ENCODE measurements at regions of chrX and their contacts with region 1.

Region 1: GRCh38 chrX:69285881-69286564 is 120.8 kb upstream of the PJA1 start:
- DNase-seq: no peak
- H3K4me3 ChIP-seq: peak overlapping the region; percentile 47 to 59 (median 50)
- H3K27ac ChIP-seq: peak overlapping the region; percentile 28 to 72 (median 68)
- H3K4me1 ChIP-seq: peaks cover 6 to 27% (median 19%) of the 10 kb centered on the region in 4 donors
- H3K27me3 ChIP-seq: no peaks in the 10 kb centered on the region
- CTCF ChIP-seq: peak; percentile 81 to 88 (median 88)
- EP300 ChIP-seq: no peak
- POLR2A ChIP-seq: no peak

Region 2: DNA sequence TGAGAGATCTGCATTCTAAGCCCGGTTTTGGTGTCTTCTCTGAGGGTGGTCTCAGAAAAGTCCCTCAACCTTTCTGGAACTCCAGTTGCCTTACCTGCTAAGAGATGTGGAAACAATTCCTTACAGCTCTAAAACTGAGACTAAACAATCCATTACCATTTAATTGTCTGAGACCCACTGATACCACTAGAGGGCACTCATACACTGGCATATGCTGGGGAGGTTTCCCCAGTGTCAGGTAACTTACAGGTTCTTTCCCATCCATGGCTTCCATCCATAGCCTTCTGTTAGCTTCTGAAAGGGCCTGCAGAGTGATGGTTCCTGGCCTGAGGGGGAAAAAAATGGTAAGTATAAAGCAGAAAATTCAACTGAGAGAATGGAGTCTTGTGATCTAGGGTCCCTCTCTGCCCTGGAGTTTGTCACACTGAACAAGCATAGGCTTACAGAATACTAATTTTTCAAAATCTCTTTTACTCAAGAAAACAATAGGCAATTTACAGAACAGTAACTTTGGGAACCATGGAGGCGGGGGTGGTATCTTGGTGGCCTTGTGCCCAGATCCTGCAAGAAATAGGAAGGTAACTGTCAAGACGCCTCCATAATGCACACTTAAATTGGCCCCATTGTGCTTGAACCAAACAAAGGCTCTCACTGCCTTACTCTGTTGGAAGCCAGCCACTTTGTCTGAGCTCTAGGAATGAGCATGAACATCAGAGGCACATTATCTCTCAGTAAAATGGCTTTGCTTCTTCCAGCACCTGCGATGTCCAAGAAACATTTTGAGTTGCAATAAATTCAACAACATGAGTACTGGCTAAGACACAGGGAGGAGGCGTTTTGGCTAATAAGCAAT is 1088.9 kb before region 1 on chrX:
- intact Hi-C with region 1: loop called (anchors 10 kb)
- DNase-seq: no peak
- H3K4me3 ChIP-seq: no peak overlapping the region
- H3K27ac ChIP-seq: no peak overlapping the region
- H3K4me1 ChIP-seq: no peaks in the 10 kb centered on the region
- H3K27me3 ChIP-seq: no peaks in the 10 kb centered on the region
- CTCF ChIP-seq: peak; percentile 54 to 64 (median 60)
- EP300 ChIP-seq: no peak
- POLR2A ChIP-seq: no peak

Region 3: DNA sequence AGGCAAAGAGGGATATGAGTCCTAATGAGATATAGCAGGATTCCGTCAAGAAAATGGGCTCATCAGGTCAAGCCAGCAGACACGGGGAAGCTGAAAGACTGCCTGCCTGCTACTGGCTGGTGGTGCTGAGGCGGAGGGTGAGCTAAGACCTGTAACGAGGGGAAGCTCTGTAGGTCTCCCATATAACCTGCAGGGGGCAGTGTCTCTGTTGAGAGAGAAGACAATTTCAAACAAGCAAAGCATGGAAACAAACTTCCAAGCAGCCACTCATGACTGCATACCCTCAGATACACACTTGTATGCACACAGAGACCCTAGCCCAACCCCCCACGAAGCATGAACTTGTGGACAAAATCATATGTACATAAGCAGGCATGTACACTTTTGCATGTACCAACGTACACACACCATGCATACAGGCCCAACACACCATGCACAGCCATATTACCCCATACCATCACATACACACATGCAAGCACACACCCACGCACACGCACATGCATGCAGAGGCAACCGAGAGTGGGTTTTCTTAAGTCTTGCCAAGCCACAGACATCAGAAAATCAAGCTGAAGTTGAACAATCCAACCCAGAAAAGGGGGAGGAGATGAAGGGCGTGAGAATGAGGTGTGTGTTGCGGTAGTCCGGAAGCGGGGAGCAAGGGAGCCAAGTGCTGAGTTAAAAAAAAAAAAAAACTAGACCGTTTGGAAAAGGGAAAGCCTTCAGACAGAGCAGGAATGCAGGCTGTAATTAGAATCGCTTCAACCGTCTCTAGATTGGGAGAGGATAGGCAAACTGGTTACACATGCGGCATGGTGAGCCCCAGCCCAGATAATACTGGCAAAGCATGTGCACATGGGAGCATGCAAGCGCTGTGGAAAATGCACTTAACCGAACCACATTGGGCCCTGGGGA is 191.8 kb before region 1 on chrX:
- intact Hi-C with region 1: loop called (anchors 10 kb)
- DNase-seq: no peak
- H3K4me3 ChIP-seq: no peak overlapping the region
- H3K27ac ChIP-seq: no peak overlapping the region
- H3K4me1 ChIP-seq: no peaks in the 10 kb centered on the region
- H3K27me3 ChIP-seq: no peaks in the 10 kb centered on the region
- CTCF ChIP-seq: peak; percentile 36 to 60 (median 46)
- EP300 ChIP-seq: no peak
- POLR2A ChIP-seq: no peak